Calu3 (cell line): ENCODE measurements at regions of chr14 and their contacts with region 1.

Region 1: DNA sequence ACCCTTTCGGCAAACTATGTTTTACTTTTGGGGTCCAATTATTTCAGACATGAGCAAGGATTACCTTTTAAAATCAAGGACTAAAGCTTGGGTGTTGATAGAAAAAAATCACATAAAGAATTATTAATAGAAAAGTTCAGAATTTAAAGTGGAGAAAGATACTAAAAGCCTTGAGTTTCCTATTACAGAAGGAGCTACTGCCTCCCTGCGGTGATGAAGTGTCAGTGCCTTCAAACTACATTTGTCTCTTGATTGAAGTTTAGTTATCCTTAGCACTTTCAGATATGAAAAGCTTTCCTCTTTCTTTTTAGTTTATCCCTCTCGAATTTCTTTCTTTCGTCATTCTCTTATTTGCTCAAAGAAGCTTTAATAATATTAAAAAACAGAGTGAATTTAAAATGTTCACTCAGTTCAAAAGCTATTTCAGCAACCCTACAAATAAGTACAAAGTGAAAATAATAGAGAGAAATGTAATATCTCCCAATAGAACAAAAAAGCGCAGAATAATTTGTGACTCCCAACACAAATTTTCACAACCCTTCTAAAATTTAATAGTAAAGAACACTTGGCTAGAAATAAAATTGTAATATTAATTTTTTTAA is 87.6 kb downstream of the SEC23A start:
- DNase-seq: peak; percentile 24
- H3K4me3 Mint-ChIP-seq: no peak overlapping the region
- H3K27ac Mint-ChIP-seq: no peak overlapping the region
- H3K4me1 Mint-ChIP-seq: no peaks in the 10 kb centered on the region
- H3K27me3 Mint-ChIP-seq: no peaks in the 10 kb centered on the region
- CTCF ChIP-seq: peak; percentile 49

Region 2: DNA sequence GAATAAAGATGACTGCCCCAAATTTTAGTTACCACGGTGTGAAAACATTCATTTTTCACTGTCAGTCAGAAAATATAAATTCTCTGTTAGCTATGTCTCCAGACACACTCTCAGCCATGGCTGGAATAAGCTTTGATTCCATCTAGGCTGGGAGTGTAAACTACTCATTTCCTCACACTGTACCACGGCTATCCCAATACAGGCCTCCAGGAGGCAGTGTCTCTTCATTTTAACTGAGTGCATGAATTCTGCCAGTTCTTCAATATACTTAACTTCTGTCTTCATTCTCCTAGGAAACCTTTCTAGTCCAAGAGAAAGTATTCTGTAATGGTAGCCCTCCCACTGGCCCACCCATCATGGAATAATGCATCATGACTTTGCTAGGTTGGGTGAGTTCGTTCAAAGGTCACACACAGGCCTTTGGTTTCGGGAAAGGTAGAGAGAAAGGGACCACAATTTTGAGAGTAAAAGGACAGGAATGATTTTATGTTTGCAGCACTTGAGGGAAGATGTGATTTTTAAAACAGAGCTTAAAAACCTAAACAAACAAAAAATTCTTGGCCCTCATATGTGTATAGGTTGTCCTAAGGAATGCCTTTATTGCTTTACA is 293.5 kb before region 1 on chr14:
- CTCF ChIA-PET with region 1: interaction called, 5 read pairs
- intact Hi-C with region 1: loop called (anchors 1 kb)
- DNase-seq: peak; percentile 76
- H3K4me3 Mint-ChIP-seq: no peak overlapping the region
- H3K27ac Mint-ChIP-seq: no peak overlapping the region
- H3K4me1 Mint-ChIP-seq: peaks cover 9% of the 10 kb centered on the region
- H3K27me3 Mint-ChIP-seq: no peaks in the 10 kb centered on the region
- CTCF ChIP-seq: peak; percentile 45

Region 3: DNA sequence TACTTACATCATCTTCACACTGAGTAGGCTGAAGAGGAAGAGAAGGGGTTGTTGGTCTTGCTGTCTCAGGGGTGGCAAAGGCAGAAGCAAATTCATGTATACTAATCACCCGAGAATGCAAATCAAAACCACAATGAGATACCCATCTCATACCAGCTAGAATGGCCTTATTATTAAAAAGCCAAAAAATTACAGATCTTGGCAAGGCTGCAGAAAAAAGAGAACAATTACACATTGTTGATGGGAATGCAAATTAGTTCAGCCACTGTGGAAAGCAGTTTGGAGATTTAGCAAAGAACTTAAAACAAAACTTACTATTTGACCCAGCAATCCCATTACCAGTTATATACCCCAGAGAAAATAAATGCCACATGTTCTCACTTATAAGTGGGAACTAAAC is 67.3 kb before region 1 on chr14:
- CTCF ChIA-PET with region 1: no interaction called
- intact Hi-C with region 1: loop called (anchors 10 kb)
- DNase-seq: no peak
- H3K4me3 Mint-ChIP-seq: no peak overlapping the region
- H3K27ac Mint-ChIP-seq: no peak overlapping the region
- H3K4me1 Mint-ChIP-seq: peaks cover 15% of the 10 kb centered on the region
- H3K27me3 Mint-ChIP-seq: no peaks in the 10 kb centered on the region
- CTCF ChIP-seq: no peak